Activated T-helper 1 cell treated with anti-CD3 and anti-CD28 coated beads, Interleukin-12 subunit alpha, Interleukin-12 subunit beta, Interleukin-2, Interleukin-4 antibody, amounts not matched to agents 30 ng/mL and 10 ng/mL and 1 ng/mL, durations not matched to agents 14 hours and 24 hours and 36 hours (primary cell): ENCODE measurements at regions of chr6 and their contacts with region 1.

Region 1: GRCh38 chr6:111478749-111479148 is 4.3 kb downstream of the REV3L start:
- DNase-seq: no peak
- H3K4me3 Mint-ChIP-seq: no peak overlapping the region
- H3K27ac Mint-ChIP-seq: no peak overlapping the region
- H3K4me1 Mint-ChIP-seq: peaks cover 37% of the 10 kb centered on the region
- H3K27me3 Mint-ChIP-seq: no peaks in the 10 kb centered on the region

Region 2: GRCh38 chr6:111338843-111339242 is 139.9 kb before region 1 on chr6:
- intact Hi-C with region 1: loop called (anchors 2 kb)
- DNase-seq: no peak
- H3K4me3 Mint-ChIP-seq: no peak overlapping the region
- H3K27ac Mint-ChIP-seq: peak overlapping the region; percentile 15
- H3K4me1 Mint-ChIP-seq: peaks cover 12% of the 10 kb centered on the region
- H3K27me3 Mint-ChIP-seq: no peaks in the 10 kb centered on the region

Region 3: GRCh38 chr6:111367393-111368088 is 111.2 kb before region 1 on chr6:
- intact Hi-C with region 1: loop called (anchors 1 kb)
- DNase-seq: peak; percentile 14
- H3K4me3 Mint-ChIP-seq: no peak overlapping the region
- H3K27ac Mint-ChIP-seq: no peak overlapping the region
- H3K4me1 Mint-ChIP-seq: no peaks in the 10 kb centered on the region
- H3K27me3 Mint-ChIP-seq: no peaks in the 10 kb centered on the region

Region 4: GRCh38 chr6:111427341-111428116 is 51.2 kb before region 1 on chr6:
- intact Hi-C with region 1: loop called (anchors 5 kb)
- DNase-seq: no peak
- H3K4me3 Mint-ChIP-seq: peak overlapping the region; percentile 34
- H3K27ac Mint-ChIP-seq: no peak overlapping the region
- H3K4me1 Mint-ChIP-seq: peaks cover 37% of the 10 kb centered on the region
- H3K27me3 Mint-ChIP-seq: no peaks in the 10 kb centered on the region